ENCODE measurements at regions of chr6 and their contacts with region 1.

Region 1: DNA sequence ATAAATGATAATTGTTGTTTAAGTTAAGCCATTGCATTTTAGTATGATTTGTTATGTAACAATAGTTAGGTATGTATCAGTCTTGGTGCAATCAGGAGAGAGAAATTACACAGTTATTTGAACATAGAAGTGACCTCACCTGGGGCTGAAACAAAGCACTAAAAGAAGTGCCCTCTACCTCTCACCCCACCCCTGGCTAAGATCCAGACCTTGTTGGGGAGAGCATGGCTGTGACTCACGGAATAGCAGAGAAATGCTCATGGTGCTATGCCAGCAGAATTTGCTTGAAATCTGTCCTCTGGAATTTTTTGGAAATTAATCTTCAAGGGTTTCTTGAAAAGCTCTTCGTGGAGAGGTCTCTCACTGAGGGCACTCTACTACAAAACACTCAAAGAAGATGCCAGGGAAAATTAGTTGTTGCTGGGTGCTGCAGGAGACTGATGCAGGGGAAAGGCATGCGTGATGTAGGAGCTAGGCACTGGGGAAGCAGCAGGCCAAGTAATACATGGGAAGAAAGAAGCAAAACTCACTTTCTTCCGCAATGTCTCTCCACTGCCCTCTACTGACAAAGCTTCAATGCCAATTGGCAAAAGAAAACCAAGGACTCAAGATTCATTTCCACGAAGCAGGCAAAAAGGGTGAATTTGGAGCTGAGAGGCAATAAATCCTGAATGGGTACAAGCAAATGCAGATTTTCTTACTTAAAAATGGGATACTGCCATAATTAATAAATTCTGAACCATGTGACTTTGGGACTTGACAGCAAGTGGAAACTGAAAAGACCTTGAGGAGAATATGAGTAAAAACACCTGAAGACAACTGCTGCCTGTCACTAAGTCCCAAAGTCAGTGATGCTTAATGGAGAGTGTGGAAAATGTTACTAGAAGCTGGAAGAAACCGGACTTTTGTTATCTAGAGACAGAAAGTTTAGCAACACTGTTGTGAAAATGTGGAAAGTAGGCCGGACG is 136.3 kb upstream of the ZNF184 start:
- DNase-seq: peak in 1 of 2 experiments; percentile 69
- H3K4me3 ChIP-seq: no peak overlapping the region
- H3K4me3 Mint-ChIP-seq: no peak overlapping the region
- H3K27ac Mint-ChIP-seq: no peak overlapping the region
- H3K4me1 ChIP-seq: no peaks in the 10 kb centered on the region
- H3K4me1 Mint-ChIP-seq: peaks cover 9% of the 10 kb centered on the region
- H3K27me3 ChIP-seq: no peaks in the 10 kb centered on the region
- H3K27me3 Mint-ChIP-seq: peaks cover 2% of the 10 kb centered on the region
- CTCF ChIP-seq: peak; percentile 61 to 79

Region 2: DNA sequence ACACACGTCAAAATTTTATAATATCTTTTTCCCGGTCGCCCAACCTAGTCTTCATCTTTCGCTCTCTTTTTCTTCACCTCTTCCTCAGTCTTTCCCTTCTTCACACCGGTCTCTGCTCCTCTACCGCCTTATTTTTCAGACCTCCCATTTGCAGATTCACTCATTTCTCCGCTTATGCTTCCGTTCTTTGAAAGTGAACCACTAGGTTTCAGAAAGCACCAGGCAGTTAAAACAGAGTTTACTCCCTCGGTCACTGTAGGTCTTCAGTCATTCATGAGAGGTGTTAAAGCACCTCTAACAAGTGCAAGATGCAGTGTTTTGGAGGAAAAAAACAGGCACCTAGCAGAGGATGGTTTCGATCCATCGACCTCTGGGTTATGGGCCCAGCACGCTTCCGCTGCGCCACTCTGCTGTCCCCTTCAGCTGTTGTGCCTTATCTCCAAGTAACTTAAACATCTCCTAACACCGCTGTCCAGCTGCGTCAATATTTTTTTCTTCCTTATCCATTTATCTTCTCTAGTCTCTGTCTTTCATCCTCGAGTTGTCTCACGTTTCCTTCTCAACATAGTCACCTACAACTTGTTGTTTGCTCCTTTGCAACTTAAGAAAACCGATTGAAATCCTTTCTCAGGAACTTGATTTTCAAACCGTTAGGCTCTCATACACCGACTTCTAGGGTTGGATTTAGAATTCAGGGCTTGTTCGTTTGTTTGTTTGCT is 16.6 kb before region 1 on chr6:
- CTCF ChIA-PET with region 1: no interaction called
- POLR2A ChIA-PET with region 1: no interaction called
- intact Hi-C with region 1: loop called (anchors 1 kb)
- DNase-seq: peak; percentile 67 to 82
- H3K4me3 ChIP-seq: peak overlapping the region; percentile 53
- H3K4me3 Mint-ChIP-seq: no peak overlapping the region
- H3K27ac Mint-ChIP-seq: no peak overlapping the region
- H3K4me1 ChIP-seq: no peaks in the 10 kb centered on the region
- H3K4me1 Mint-ChIP-seq: no peaks in the 10 kb centered on the region
- H3K27me3 ChIP-seq: no peaks in the 10 kb centered on the region
- H3K27me3 Mint-ChIP-seq: no peaks in the 10 kb centered on the region
- CTCF ChIP-seq: no peak